ENCODE measurements at regions of chr1 and their contacts with region 1.

Region 1: DNA sequence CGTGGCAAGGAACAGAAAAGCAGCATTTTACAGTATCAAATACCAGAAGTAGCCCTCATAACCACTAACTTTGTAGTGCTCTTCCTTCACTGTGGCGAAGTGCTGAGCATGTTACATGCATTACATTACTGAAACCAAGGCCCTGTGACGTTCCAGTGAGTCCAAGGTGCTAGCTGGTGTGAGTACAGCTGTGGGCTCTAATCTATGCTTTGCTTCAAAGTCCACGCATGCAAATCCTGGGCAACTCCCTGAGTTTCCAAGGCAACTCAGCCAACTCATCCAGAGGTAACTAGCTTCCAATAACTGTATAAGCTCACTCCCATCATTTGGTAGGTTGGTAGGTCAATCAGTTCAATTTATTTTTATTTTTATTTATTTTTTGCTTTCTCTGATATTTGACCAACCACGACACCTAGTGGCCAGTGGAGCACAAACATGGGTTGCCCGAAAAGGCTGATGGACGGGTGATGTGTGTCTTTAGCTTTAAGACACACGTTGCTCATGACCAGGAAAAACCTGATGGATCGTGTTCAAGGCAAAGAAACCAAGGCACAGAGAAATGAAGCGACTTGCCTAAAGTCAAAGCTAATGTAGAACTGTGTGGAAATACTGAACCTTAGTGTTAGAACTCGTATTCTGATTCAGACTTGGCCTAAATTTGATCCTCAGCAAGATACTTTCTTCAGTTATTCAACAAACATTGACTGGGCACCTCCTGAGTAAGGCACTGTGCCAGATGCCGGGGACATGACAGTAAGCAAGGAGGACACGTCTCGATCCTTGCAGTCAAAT is 73.0 kb downstream of the GNG12 start:
- DNase-seq: peak; percentile 65
- H3K4me3 Mint-ChIP-seq: no peak overlapping the region
- H3K27ac Mint-ChIP-seq: no peak overlapping the region
- H3K4me1 Mint-ChIP-seq: no peaks in the 10 kb centered on the region
- H3K27me3 Mint-ChIP-seq: peaks cover 17% of the 10 kb centered on the region

Region 2: GRCh38 chr1:67530071-67530470 is 230.2 kb before region 1 on chr1:
- CTCF ChIA-PET with region 1: interaction called, 154 read pairs
- POLR2A ChIA-PET with region 1: no interaction called
- intact Hi-C with region 1: loop called (anchors 1 kb)
- DNase-seq: no peak
- H3K4me3 Mint-ChIP-seq: no peak overlapping the region
- H3K27ac Mint-ChIP-seq: no peak overlapping the region
- H3K4me1 Mint-ChIP-seq: no peaks in the 10 kb centered on the region
- H3K27me3 Mint-ChIP-seq: peaks cover 5% of the 10 kb centered on the region

Region 3: GRCh38 chr1:67535474-67535873 is 224.8 kb before region 1 on chr1:
- CTCF ChIA-PET with region 1: interaction called, 154 read pairs
- POLR2A ChIA-PET with region 1: no interaction called
- intact Hi-C with region 1: loop called (anchors 1 kb)
- DNase-seq: peak; percentile 79
- H3K4me3 Mint-ChIP-seq: no peak overlapping the region
- H3K27ac Mint-ChIP-seq: no peak overlapping the region
- H3K4me1 Mint-ChIP-seq: no peaks in the 10 kb centered on the region
- H3K27me3 Mint-ChIP-seq: peaks cover 4% of the 10 kb centered on the region

Region 4: DNA sequence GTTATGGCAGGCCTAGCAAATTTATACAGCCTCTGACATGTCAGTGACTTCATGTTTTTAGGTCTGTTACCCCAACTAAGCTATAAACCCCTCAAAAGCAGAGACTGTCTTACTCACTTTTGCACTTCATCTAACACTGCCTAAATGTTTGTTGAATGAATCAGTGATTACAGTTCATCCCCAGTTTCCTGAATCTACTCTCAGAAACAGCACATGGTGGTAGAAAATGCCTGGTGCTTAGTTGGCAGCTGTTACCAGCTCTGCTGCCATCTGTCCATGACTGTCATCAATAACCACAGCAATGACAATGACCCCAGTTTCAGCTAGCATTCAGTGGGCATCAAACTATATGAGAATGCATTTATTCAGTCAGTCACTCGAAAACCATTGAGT is 219.5 kb before region 1 on chr1:
- CTCF ChIA-PET with region 1: interaction called, 154 read pairs
- POLR2A ChIA-PET with region 1: no interaction called
- intact Hi-C with region 1: loop called (anchors 1 kb)
- DNase-seq: no peak
- H3K4me3 Mint-ChIP-seq: no peak overlapping the region
- H3K27ac Mint-ChIP-seq: no peak overlapping the region
- H3K4me1 Mint-ChIP-seq: no peaks in the 10 kb centered on the region
- H3K27me3 Mint-ChIP-seq: no peaks in the 10 kb centered on the region

Region 5: GRCh38 chr1:67570473-67571143 is 189.6 kb before region 1 on chr1:
- CTCF ChIA-PET with region 1: interaction called, 71 read pairs
- POLR2A ChIA-PET with region 1: no interaction called
- intact Hi-C with region 1: no loop called
- DNase-seq: no peak
- H3K4me3 Mint-ChIP-seq: no peak overlapping the region
- H3K27ac Mint-ChIP-seq: no peak overlapping the region
- H3K4me1 Mint-ChIP-seq: no peaks in the 10 kb centered on the region
- H3K27me3 Mint-ChIP-seq: no peaks in the 10 kb centered on the region

Region 6: DNA sequence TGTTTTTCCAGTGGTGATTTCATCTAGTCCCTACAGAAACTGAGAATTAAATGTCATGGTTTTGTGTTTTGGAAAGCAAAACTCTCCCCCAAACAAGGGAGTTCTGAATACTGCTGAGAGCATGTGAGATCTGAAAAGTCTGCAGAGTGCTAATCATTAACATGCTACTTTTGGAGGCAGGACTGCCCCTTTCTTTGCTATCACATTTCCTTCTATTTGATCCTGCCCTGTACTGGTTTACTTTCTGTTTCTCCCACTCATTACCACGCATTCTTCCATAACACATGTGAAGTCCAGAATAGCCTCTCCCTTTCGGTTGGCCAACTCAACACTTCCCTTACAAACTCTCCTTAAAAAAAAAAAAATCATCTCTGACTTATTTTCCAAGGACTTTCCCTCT is 11.6 kb before region 1 on chr1:
- CTCF ChIA-PET with region 1: interaction called, 40 read pairs
- POLR2A ChIA-PET with region 1: no interaction called
- intact Hi-C with region 1: no loop called
- DNase-seq: no peak
- H3K4me3 Mint-ChIP-seq: no peak overlapping the region
- H3K27ac Mint-ChIP-seq: no peak overlapping the region
- H3K4me1 Mint-ChIP-seq: peaks cover 22% of the 10 kb centered on the region
- H3K27me3 Mint-ChIP-seq: peaks cover 1% of the 10 kb centered on the region

Region 7: DNA sequence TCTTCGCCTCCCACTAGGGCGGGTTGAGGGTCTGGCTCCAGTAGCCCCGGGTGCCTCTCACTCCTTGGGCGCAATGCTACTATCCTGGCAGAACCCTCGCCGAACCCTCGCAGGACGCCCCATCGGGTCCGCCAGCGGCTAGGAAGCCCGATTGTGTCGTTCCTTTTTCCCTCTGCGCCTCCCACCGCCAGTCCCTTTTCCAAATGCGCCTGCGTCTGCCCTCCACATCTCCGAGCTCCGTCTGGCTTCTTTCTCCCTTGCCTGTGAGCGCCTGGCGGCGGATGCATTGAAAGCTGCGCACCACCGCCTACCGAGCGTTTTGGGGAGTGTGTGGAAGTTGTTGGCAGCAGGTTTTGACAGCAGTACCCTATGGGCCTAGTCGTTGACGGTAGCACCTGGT is 291.2 kb after region 1 on chr1:
- CTCF ChIA-PET with region 1: no interaction called
- POLR2A ChIA-PET with region 1: no interaction called
- intact Hi-C with region 1: no loop called
- DNase-seq: no peak
- H3K4me3 Mint-ChIP-seq: no peak overlapping the region
- H3K27ac Mint-ChIP-seq: no peak overlapping the region
- H3K4me1 Mint-ChIP-seq: no peaks in the 10 kb centered on the region
- H3K27me3 Mint-ChIP-seq: peaks cover 8% of the 10 kb centered on the region